Transverse colon (tissue), 4 donors: ENCODE measurements at regions of chr7 and their contacts with region 1.

Region 1: GRCh38 chr7:113015032-113015645 is 71.5 kb downstream of the GPR85 start:
- DNase-seq: no peak
- H3K4me3 ChIP-seq: no peak overlapping the region
- H3K27ac ChIP-seq: no peak overlapping the region
- H3K4me1 ChIP-seq: no peaks in the 10 kb centered on the region
- H3K27me3 ChIP-seq: no peaks in the 10 kb centered on the region
- CTCF ChIP-seq: peak in 4 of 5 experiments; percentile 16 to 30 (median 28)
- EP300 ChIP-seq: no peak
- POLR2A ChIP-seq: no peak

Region 2: GRCh38 chr7:113421696-113422330 is 406.7 kb after region 1 on chr7:
- in situ Hi-C with region 1: loop called in 1 of 4 experiments (anchors 25 kb)
- intact Hi-C with region 1: no loop called
- DNase-seq: peak; percentile 77
- H3K4me3 ChIP-seq: no peak overlapping the region
- H3K27ac ChIP-seq: no peak overlapping the region
- H3K4me1 ChIP-seq: peaks cover 0 to 3% (median 0%) of the 10 kb centered on the region in 4 donors
- H3K27me3 ChIP-seq: no peaks in the 10 kb centered on the region
- CTCF ChIP-seq: peak; percentile 71 to 80 (median 77)
- EP300 ChIP-seq: no peak
- POLR2A ChIP-seq: no peak